GM10248 (cell line): ENCODE measurements at regions of chrX and their contacts with region 1.

Region 1: GRCh38 chrX:69466546-69466945 is 37.6 kb upstream of the NALF2 start:
- DNase-seq: no peak
- CTCF ChIP-seq: no peak

Region 2: DNA sequence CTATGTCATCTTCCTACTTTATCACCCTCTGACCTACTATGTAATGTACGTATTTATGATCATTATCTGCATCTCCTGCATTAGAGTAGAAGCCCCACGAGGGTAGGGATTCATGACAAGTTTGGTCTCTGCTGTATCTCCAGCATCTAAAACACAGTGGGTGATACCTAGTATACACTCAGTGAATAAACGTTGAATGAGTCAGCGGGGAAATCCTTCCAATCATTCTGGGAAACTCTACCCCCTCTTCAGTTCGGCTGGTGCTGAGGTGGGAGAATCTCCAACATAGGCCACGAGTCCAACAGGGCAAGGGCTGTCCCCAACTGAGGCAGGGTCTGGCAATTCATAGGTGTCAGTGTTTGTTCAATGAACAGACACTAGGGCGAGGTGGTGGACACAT is 712.1 kb before region 1 on chrX:
- CTCF ChIA-PET with region 1: no interaction called
- POLR2A ChIA-PET with region 1: interaction called, 11 read pairs
- DNase-seq: no peak
- CTCF ChIP-seq: no peak

Region 3: DNA sequence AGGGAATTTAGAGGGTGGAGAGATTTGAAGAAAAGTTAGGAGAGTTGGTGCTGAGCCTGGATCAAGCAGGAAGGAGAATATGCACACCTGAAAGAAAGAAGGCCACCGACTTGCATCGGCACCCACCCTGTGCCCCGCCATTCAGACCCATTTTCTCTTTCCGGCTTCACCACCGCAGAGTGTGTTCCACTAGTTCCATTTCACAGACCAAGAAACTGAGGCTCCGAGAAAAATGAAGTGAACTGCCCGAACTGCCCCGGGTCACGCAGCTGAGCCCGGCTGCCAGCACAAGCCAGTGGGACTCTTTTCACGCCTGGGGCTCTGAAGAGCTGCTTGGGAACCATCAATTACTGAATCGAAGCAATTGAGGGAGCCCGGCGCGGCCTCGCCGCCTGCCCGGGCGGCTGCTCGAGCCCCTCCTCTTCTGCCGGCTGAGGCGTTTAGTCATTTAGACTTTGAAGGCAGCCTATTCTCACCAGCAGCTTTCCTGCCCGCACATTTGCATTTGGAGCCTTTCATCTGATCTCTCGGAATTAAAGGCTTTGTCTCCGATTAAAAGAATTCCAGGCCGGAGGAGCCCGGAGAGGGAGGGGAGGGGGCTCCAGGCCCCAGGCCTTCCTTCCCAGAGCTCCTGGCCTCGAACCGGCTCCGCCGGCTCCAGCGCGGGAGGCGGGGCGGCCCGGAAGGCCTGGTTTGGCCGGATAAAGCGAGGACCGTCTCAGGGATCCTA is 161.0 kb before region 1 on chrX:
- CTCF ChIA-PET with region 1: no interaction called
- POLR2A ChIA-PET with region 1: no interaction called
- DNase-seq: no peak
- CTCF ChIP-seq: no peak

Region 4: GRCh38 chrX:69705818-69706217 is 239.3 kb after region 1 on chrX:
- CTCF ChIA-PET with region 1: no interaction called
- POLR2A ChIA-PET with region 1: no interaction called
- DNase-seq: no peak
- CTCF ChIP-seq: no peak